ENCODE measurements at regions of chr18 and their contacts with region 1.

Region 1: DNA sequence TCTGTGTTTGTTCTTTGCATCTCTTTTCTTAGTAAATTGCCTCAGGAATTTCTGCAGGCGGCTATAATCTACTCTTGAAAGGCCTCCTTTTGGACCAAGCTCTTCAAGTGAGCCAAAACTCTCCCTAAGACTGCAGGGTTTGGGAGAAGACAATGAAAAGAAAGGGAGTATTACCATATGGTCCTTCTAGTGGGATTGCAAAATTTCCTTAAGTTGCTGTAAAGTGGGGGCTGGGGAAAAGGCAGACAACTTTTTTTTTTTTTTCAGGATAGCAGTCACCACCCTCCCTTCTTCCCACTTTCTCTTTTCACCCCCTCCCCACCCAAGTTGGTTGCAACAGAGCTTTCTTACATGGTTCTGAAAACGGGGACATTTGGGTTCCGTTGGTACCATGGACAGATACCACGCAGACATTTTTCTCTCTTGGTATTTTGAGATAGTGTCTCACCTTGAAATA is 183.7 kb downstream of the FHOD3 start:
- DNase-seq: no peak
- H3K4me3 ChIP-seq: no peak overlapping the region
- H3K4me3 Mint-ChIP-seq: no peak overlapping the region
- H3K27ac ChIP-seq: no peak overlapping the region
- H3K27ac Mint-ChIP-seq: no peak overlapping the region
- H3K4me1 ChIP-seq: no peaks in the 10 kb centered on the region
- H3K4me1 Mint-ChIP-seq: no peaks in the 10 kb centered on the region
- H3K27me3 ChIP-seq: no peaks in the 10 kb centered on the region
- H3K27me3 Mint-ChIP-seq: peaks cover 0 to 3% of the 10 kb centered on the region in 2 donors

Region 2: GRCh38 chr18:36255072-36255698 is 226.0 kb before region 1 on chr18:
- CTCF ChIA-PET with region 1: no interaction called
- POLR2A ChIA-PET with region 1: no interaction called
- intact Hi-C with region 1: no loop called
- DNase-seq: no peak
- H3K4me3 ChIP-seq: no peak overlapping the region
- H3K4me3 Mint-ChIP-seq: no peak overlapping the region
- H3K27ac ChIP-seq: no peak overlapping the region
- H3K27ac Mint-ChIP-seq: no peak overlapping the region
- H3K4me1 ChIP-seq: no peaks in the 10 kb centered on the region
- H3K4me1 Mint-ChIP-seq: no peaks in the 10 kb centered on the region
- H3K27me3 ChIP-seq: no peaks in the 10 kb centered on the region
- H3K27me3 Mint-ChIP-seq: peaks cover 0 to 5% of the 10 kb centered on the region in 2 donors

Region 3: DNA sequence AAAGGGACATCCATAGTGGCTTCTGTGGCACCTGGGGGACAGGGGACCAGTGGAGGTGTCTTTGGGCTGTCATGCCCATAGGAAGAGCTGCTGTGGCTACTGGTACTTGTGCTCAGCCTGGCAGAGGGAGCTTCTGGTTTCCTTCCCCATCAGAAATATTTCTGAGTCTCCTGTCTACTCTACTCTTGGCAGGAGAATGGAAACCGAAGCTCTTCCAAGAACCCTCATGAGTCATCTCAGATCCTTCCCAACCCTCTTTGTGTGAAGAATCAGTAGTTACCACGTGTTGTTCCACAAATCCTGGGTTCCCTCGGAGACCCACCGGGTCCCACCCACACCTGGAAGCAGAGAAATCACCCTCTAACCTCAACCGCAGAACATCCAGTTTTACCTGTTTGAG is 51.2 kb after region 1 on chr18:
- CTCF ChIA-PET with region 1: no interaction called
- POLR2A ChIA-PET with region 1: no interaction called
- intact Hi-C with region 1: no loop called
- DNase-seq: no peak
- H3K4me3 ChIP-seq: no peak overlapping the region
- H3K4me3 Mint-ChIP-seq: no peak overlapping the region
- H3K27ac ChIP-seq: no peak overlapping the region
- H3K27ac Mint-ChIP-seq: no peak overlapping the region
- H3K4me1 ChIP-seq: no peaks in the 10 kb centered on the region
- H3K4me1 Mint-ChIP-seq: no peaks in the 10 kb centered on the region
- H3K27me3 ChIP-seq: no peaks in the 10 kb centered on the region
- H3K27me3 Mint-ChIP-seq: peaks cover 0 to 5% of the 10 kb centered on the region in 2 donors

Region 4: DNA sequence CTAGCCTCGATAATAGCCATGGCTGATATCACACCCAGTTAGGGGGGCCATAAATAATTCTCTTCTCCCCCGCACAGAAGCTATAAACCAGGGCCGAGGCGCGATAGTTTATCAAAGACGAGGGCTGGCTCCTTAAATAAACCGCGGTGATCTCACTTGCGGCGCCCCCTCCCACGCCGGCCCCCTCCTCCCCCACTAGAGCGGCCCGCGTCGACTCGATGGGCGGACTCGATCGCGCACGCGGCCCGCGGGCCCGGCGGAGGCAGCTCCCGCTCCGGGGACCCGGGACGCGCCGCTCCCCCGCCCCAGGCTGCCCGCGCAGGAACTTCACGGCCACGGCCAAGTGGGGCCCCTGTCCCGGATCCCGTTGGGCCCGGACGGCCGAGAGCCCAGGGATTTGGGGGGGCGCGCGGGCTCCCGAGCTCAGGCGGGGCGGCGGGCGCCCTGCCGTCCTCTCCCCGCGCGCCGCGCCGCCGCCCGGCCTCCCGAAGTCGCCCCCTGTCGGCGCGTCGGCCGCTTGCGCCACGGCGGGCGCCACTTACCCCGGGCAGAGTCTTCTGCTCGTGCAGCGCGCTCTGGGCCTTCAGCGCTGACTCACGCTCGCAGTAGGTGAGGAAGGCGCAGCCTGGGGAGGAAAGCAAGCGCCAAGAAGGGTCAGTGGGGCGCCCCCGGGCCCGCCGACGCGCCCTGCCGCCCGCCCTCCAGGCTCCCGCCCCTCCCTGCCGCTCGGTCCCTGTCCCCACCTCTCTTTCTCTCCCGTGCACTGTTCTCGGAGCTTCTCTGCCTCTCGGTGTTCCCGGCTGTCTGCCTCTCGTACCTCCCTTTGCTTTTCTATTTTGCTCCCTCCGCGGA is 1004.0 kb after region 1 on chr18:
- CTCF ChIA-PET with region 1: no interaction called
- POLR2A ChIA-PET with region 1: no interaction called
- intact Hi-C with region 1: loop called (anchors 10 kb)
- DNase-seq: no peak
- H3K4me3 ChIP-seq: no peak overlapping the region
- H3K4me3 Mint-ChIP-seq: no peak overlapping the region
- H3K27ac ChIP-seq: no peak overlapping the region
- H3K27ac Mint-ChIP-seq: no peak overlapping the region
- H3K4me1 ChIP-seq: no peaks in the 10 kb centered on the region
- H3K4me1 Mint-ChIP-seq: peaks cover 2 to 6% (median 5%) of the 10 kb centered on the region in 4 donors
- H3K27me3 ChIP-seq: peaks cover 11% of the 10 kb centered on the region
- H3K27me3 Mint-ChIP-seq: peaks cover 46 to 47% of the 10 kb centered on the region in 2 donors

Measured in CD4-positive, alpha-beta memory T cell (primary cell).